ENCODE measurements at regions of chr10 and their contacts with region 1.

Region 1: DNA sequence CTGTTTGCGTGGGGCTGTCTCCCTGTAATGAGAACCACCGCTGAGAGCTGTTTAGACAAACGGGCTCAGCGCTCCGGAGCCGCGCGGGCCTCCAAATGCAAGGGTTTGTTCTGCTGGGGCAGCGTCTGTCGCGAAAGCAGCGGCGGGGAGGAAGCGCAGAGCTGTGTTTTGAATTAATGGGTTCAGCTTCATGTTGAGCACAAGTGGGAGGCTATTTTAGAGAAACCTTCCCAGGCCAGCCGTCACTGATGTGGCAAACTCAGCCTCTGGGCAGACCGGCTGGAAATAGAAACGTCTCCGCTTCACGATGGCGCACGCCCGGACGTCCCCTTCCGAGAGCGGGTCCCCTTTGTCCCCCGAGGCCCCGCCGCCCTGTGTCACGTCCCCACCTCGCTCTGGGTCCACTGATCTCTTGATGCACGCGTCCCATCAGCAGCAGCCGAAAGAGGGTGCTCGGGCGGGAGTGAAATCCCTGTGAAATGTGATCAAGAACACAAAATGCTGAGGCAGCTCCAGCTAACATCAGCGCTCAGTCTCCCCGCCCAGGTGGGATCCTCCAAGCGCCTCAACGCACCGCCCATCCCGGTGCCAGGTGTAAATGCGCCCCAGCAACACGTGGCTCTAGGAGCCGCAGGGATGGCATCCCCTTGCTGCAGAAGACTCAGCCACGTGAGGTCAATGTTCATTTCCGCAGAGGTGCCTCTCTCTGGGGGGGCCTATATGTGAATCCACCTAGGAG is 44.9 kb downstream of the BAMBI start:
- DNase-seq: peak; percentile 66 to 72
- H3K4me3 ChIP-seq: peak overlapping the region; percentile 68
- H3K4me3 Mint-ChIP-seq: peak overlapping the region; percentile 91
- H3K27ac Mint-ChIP-seq: peak overlapping the region; percentile 75
- H3K4me1 ChIP-seq: peaks cover 23% of the 10 kb centered on the region
- H3K4me1 Mint-ChIP-seq: peaks cover 8% of the 10 kb centered on the region
- H3K27me3 ChIP-seq: no peaks in the 10 kb centered on the region
- H3K27me3 Mint-ChIP-seq: no peaks in the 10 kb centered on the region
- CTCF ChIP-seq: peak in 1 of 2 experiments; percentile 32

Region 2: DNA sequence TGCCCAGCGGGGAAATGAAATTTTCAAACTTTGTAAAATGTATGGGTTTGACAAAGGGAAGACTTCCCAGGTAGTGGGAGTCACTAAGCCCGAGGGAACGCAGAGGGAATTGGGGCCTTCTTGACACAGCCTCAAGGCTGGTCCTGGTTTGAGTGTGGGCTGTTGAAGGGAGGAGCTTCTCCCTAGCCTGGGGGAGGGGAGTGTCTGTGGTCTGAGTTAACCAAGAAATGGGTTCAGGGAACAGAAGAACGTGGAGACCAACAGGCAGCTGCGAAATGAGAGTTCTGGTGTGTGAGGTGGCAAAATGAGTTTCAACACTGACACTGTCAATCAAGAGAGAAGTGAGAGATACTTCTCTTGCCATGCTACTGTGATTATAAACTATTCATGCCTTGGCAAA is 77.6 kb before region 1 on chr10:
- CTCF ChIA-PET with region 1: no interaction called
- POLR2A ChIA-PET with region 1: no interaction called
- intact Hi-C with region 1: no loop called
- DNase-seq: no peak
- H3K4me3 ChIP-seq: no peak overlapping the region
- H3K4me3 Mint-ChIP-seq: no peak overlapping the region
- H3K27ac Mint-ChIP-seq: no peak overlapping the region
- H3K4me1 ChIP-seq: no peaks in the 10 kb centered on the region
- H3K4me1 Mint-ChIP-seq: no peaks in the 10 kb centered on the region
- H3K27me3 ChIP-seq: no peaks in the 10 kb centered on the region
- H3K27me3 Mint-ChIP-seq: no peaks in the 10 kb centered on the region
- CTCF ChIP-seq: no peak

Region 3: GRCh38 chr10:28684986-28685589 is 37.1 kb before region 1 on chr10:
- CTCF ChIA-PET with region 1: no interaction called
- POLR2A ChIA-PET with region 1: no interaction called
- intact Hi-C with region 1: no loop called
- DNase-seq: peak in 1 of 2 experiments; percentile 26
- H3K4me3 ChIP-seq: no peak overlapping the region
- H3K4me3 Mint-ChIP-seq: no peak overlapping the region
- H3K27ac Mint-ChIP-seq: no peak overlapping the region
- H3K4me1 ChIP-seq: peaks cover 63% of the 10 kb centered on the region
- H3K4me1 Mint-ChIP-seq: peaks cover 57% of the 10 kb centered on the region
- H3K27me3 ChIP-seq: no peaks in the 10 kb centered on the region
- H3K27me3 Mint-ChIP-seq: no peaks in the 10 kb centered on the region
- CTCF ChIP-seq: no peak

Region 4: DNA sequence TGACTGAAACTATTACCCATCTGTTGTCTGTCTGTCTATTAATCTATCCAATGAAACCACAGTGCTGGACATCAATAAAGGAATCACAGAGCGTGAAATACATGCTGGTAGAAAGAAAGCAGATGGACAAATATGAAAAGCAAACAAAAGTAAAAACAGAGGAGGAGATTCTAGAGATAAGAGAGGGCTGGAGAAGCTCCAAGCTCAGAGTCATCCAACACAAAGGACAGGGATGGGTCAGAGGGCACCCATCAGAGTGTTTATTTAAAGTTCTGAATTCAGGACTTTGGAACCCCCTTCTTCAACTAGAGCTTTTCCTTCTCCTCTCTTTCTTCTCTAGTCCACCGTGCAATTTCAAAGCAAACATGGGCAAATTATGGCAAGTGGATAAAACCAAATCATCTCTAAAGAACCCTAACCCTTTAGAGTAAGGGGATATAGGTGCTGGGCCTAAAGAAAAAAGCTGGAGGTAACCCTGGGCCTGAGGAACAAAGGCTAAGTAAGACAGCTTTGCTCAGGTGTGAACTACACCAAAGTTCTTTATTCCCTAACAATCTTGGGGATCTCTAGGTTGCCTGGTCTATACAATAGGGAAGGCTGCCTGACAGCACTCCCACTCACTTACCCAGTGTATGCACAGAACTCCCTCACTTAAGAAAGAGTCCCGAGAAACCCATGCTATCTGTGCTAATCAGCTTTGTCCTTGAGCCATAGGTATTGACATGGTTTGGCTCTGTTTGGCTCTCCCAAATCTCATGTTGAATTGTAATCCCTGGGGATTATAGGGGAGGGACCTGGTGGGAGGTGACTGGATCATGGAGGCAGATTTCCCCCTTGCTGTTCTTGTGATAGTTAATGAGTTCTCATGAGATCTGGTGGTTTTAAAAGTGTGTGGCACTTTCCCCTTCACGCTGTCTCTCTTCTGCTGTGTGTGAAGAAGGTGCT is 52.1 kb after region 1 on chr10:
- CTCF ChIA-PET with region 1: no interaction called
- POLR2A ChIA-PET with region 1: interaction called, 4 read pairs
- intact Hi-C with region 1: loop called (anchors 5 kb)
- DNase-seq: peak; percentile 63 to 70
- H3K4me3 ChIP-seq: no peak overlapping the region
- H3K4me3 Mint-ChIP-seq: peak overlapping the region; percentile 47
- H3K27ac Mint-ChIP-seq: peak overlapping the region; percentile 74
- H3K4me1 ChIP-seq: peaks cover 36% of the 10 kb centered on the region
- H3K4me1 Mint-ChIP-seq: peaks cover 31% of the 10 kb centered on the region
- H3K27me3 ChIP-seq: no peaks in the 10 kb centered on the region
- H3K27me3 Mint-ChIP-seq: no peaks in the 10 kb centered on the region
- CTCF ChIP-seq: no peak

Region 5: DNA sequence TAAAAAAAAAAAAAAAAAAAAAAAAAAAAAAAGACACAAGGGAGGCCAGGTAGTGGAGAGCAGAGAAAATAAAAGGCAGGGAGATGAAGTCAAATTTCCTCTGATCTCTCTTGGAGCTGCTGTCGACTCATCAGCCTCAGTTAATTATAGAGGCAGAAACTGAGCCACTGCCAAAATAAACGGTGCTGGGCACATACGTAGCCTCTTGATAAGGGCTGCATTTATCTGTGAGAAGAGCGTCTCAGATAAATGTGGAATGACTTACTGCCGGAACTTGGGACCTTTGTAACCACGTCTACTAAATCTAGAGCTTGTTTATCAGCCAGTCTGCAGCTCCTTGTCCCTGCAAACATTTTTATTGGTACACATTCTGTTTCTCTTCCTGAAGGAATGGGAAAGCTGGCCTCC is 117.4 kb after region 1 on chr10:
- CTCF ChIA-PET with region 1: interaction called, 3 read pairs
- POLR2A ChIA-PET with region 1: no interaction called
- intact Hi-C with region 1: loop called (anchors 5 kb)
- DNase-seq: peak in 1 of 2 experiments; percentile 48
- H3K4me3 ChIP-seq: no peak overlapping the region
- H3K4me3 Mint-ChIP-seq: no peak overlapping the region
- H3K27ac Mint-ChIP-seq: no peak overlapping the region
- H3K4me1 ChIP-seq: peaks cover 26% of the 10 kb centered on the region
- H3K4me1 Mint-ChIP-seq: peaks cover 24% of the 10 kb centered on the region
- H3K27me3 ChIP-seq: no peaks in the 10 kb centered on the region
- H3K27me3 Mint-ChIP-seq: no peaks in the 10 kb centered on the region
- CTCF ChIP-seq: no peak

Measured in Caco-2 (cell line).